ENCODE measurements at regions of chr6 and their contacts with region 1.

Region 1: GRCh38 chr6:148972481-148972880 is 225.7 kb downstream of the UST start:
- DNase-seq: no peak
- H3K4me3 ChIP-seq: no peak overlapping the region
- CTCF ChIP-seq: no peak

Region 2: DNA sequence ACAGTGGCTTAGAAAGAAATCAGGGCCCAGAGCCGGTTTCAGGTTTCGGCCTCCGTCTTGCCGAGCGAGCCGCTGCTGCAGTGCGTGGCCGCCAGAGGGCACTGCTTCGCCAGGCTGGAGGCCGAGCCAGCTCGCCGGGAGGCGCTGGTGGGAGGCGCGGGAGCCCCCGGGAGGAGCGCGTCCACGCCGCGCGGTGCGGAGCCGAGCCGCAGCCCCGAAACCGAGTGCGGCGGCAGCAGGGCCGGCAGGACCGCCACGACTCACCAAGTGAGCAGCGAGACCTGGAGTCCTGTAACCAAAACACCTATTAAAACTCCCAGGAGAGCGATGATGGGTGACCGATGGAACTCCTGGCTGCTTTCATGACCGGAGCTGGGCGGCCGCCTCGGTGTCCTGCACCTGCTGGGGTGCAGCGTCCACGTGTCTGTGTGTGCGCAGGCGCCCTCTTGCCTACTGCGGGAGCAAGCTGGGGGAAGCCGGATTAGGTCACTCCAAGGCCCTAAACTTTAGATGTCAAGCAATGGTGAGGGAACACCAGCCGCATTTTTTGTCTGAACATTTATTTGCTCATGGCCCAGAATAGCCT is 412.5 kb before region 1 on chr6:
- CTCF ChIA-PET with region 1: interaction called, 34 read pairs
- POLR2A ChIA-PET with region 1: no interaction called
- DNase-seq: no peak
- H3K4me3 ChIP-seq: peak overlapping the region; percentile 59
- CTCF ChIP-seq: peak; percentile 98

Region 3: GRCh38 chr6:148959004-148959403 is 13.5 kb before region 1 on chr6:
- CTCF ChIA-PET with region 1: interaction called, 14 read pairs
- POLR2A ChIA-PET with region 1: no interaction called
- DNase-seq: no peak
- H3K4me3 ChIP-seq: no peak overlapping the region
- CTCF ChIP-seq: no peak

Region 4: DNA sequence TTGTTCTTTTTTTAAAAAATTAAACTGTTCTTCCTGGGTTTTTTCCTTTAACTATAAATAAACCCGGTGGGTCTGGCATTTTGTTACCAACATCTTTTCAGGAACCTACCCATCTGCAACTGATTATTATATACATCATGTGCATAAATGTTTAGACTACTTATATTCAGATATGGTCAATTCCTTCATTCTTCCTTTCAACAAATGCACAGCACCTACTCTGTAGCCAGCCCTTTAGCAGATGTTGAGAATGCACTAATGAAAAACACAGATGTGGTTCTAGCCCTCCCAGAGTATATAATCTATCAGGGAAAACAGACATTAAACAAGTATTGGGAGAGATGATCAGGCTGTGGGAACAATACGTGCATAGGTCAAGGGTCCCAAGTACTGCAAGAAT is 11.5 kb after region 1 on chr6:
- CTCF ChIA-PET with region 1: interaction called, 13 read pairs
- POLR2A ChIA-PET with region 1: interaction called, 3 read pairs
- DNase-seq: no peak
- H3K4me3 ChIP-seq: no peak overlapping the region
- CTCF ChIP-seq: no peak

Region 5: DNA sequence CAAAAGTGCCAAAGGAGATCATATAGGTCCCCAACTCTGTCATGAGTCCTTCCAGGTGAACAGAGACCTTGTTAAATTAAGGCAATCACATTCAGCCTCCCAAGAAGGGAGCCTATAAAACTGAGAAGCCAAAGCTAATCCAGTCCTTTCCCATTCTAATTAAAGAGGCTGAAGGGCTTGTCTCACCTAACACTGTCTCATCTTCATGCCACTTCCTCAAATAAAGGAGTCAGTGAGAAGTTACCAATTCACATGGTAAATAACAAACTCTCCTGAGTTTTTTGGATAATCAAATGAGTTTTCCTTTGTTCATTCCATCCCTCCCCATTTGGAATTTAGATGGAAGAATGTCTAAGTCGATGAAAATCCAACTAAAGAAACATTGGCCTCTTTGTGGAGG is 17.1 kb after region 1 on chr6:
- CTCF ChIA-PET with region 1: interaction called, 10 read pairs
- POLR2A ChIA-PET with region 1: no interaction called
- DNase-seq: no peak
- H3K4me3 ChIP-seq: no peak overlapping the region
- CTCF ChIP-seq: no peak